ENCODE measurements at regions of chr18 and their contacts with region 1.

Region 1: DNA sequence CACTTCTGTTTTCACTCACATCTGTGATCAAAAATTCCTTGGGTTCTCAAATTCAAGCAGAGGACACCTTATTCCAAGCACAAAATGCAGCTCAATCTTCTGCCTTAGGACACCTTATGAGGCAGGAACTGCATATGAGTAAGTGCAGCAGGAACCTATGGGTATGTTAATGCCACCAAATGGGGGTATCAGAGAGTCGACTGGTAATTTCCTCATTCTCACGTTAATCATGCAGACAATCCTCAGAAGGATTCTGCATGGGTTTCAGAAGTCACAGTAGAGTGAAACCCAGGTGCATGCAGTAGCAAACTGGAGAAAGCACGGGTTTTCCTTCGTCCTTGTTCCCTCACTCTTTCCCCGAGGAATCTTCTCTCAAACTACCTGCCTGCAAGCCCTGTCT is 452.8 kb downstream of the CBLN2 start:
- DNase-seq: no peak
- H3K4me3 ChIP-seq: no peak overlapping the region
- H3K4me3 Mint-ChIP-seq: no peak overlapping the region
- H3K27ac Mint-ChIP-seq: no peak overlapping the region
- H3K4me1 ChIP-seq: no peaks in the 10 kb centered on the region
- H3K4me1 Mint-ChIP-seq: no peaks in the 10 kb centered on the region
- H3K27me3 ChIP-seq: no peaks in the 10 kb centered on the region
- H3K27me3 Mint-ChIP-seq: no peaks in the 10 kb centered on the region
- CTCF ChIP-seq: no peak

Region 2: DNA sequence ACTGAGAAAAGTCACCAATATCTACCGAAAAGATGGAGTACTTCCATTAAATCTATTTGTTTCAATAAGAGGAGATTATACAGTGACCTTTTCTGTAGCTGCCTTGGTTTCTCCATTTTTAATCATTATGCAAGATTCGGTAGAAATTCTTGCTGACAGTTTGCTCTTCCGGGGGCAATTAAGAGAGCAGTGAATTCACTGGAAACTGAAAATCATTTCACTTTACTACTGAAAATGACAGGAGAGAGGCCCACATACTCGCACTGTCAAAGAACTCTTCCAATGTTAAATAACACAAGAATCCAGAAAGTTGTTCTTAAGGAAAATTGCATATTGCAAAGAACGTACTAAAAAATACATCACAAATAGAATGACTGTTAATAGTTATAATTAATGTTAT is 246.6 kb before region 1 on chr18:
- CTCF ChIA-PET with region 1: no interaction called
- POLR2A ChIA-PET with region 1: no interaction called
- intact Hi-C with region 1: no loop called
- DNase-seq: no peak
- H3K4me3 ChIP-seq: no peak overlapping the region
- H3K4me3 Mint-ChIP-seq: no peak overlapping the region
- H3K27ac Mint-ChIP-seq: no peak overlapping the region
- H3K4me1 ChIP-seq: no peaks in the 10 kb centered on the region
- H3K4me1 Mint-ChIP-seq: no peaks in the 10 kb centered on the region
- H3K27me3 ChIP-seq: no peaks in the 10 kb centered on the region
- H3K27me3 Mint-ChIP-seq: no peaks in the 10 kb centered on the region
- CTCF ChIP-seq: no peak

Region 3: GRCh38 chr18:72122103-72122502 is 30.7 kb after region 1 on chr18:
- CTCF ChIA-PET with region 1: no interaction called
- POLR2A ChIA-PET with region 1: no interaction called
- intact Hi-C with region 1: loop called (anchors 2 kb)
- DNase-seq: no peak
- H3K4me3 ChIP-seq: no peak overlapping the region
- H3K4me3 Mint-ChIP-seq: no peak overlapping the region
- H3K27ac Mint-ChIP-seq: no peak overlapping the region
- H3K4me1 ChIP-seq: no peaks in the 10 kb centered on the region
- H3K4me1 Mint-ChIP-seq: no peaks in the 10 kb centered on the region
- H3K27me3 ChIP-seq: no peaks in the 10 kb centered on the region
- H3K27me3 Mint-ChIP-seq: peaks cover 2% of the 10 kb centered on the region
- CTCF ChIP-seq: no peak

Region 4: GRCh38 chr18:72233106-72233505 is 141.7 kb after region 1 on chr18:
- CTCF ChIA-PET with region 1: no interaction called
- POLR2A ChIA-PET with region 1: no interaction called
- intact Hi-C with region 1: no loop called
- DNase-seq: no peak
- H3K4me3 ChIP-seq: no peak overlapping the region
- H3K4me3 Mint-ChIP-seq: no peak overlapping the region
- H3K27ac Mint-ChIP-seq: no peak overlapping the region
- H3K4me1 ChIP-seq: no peaks in the 10 kb centered on the region
- H3K4me1 Mint-ChIP-seq: no peaks in the 10 kb centered on the region
- H3K27me3 ChIP-seq: no peaks in the 10 kb centered on the region
- H3K27me3 Mint-ChIP-seq: no peaks in the 10 kb centered on the region
- CTCF ChIP-seq: no peak